ENCODE measurements at regions of chr11 and their contacts with region 1.

Region 1: GRCh38 chr11:62841361-62842184 is 2.2 kb upstream of the WDR74 start:
- DNase-seq: peak; percentile 87
- H3K4me3 Mint-ChIP-seq: no peak overlapping the region
- H3K27ac Mint-ChIP-seq: no peak overlapping the region
- H3K4me1 Mint-ChIP-seq: peaks cover 27% of the 10 kb centered on the region
- H3K27me3 Mint-ChIP-seq: no peaks in the 10 kb centered on the region

Region 2: DNA sequence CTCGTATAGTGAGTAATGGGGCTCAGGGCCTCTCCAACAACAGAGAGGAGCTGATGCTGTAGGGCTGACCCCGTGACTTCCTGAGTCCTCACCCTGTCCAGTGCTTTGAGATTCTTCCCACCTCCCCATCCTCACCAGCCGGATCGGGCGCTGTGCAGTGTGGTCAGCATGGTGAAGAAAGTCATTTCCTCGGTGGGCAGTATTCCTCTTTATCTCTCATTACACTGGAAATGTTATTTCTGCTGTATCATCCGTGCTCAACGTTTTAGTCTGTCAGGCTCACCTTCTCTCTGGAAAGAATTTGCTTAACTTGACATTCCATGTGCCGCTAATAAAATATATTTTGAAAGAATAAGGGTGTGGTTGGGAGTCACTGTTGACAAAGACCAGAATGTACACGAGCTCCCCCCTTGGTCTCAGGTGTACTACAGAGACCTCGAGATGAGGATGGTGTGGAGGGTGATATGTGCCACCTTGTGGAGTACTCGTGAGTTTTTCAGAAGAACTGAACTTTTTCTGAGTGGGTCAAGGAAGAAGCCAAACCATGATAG is 448.4 kb before region 1 on chr11:
- CTCF ChIA-PET with region 1: no interaction called
- POLR2A ChIA-PET with region 1: no interaction called
- DNase-seq: no peak
- H3K4me3 Mint-ChIP-seq: no peak overlapping the region
- H3K27ac Mint-ChIP-seq: no peak overlapping the region
- H3K4me1 Mint-ChIP-seq: peaks cover 4% of the 10 kb centered on the region
- H3K27me3 Mint-ChIP-seq: peaks cover 26% of the 10 kb centered on the region

Region 3: DNA sequence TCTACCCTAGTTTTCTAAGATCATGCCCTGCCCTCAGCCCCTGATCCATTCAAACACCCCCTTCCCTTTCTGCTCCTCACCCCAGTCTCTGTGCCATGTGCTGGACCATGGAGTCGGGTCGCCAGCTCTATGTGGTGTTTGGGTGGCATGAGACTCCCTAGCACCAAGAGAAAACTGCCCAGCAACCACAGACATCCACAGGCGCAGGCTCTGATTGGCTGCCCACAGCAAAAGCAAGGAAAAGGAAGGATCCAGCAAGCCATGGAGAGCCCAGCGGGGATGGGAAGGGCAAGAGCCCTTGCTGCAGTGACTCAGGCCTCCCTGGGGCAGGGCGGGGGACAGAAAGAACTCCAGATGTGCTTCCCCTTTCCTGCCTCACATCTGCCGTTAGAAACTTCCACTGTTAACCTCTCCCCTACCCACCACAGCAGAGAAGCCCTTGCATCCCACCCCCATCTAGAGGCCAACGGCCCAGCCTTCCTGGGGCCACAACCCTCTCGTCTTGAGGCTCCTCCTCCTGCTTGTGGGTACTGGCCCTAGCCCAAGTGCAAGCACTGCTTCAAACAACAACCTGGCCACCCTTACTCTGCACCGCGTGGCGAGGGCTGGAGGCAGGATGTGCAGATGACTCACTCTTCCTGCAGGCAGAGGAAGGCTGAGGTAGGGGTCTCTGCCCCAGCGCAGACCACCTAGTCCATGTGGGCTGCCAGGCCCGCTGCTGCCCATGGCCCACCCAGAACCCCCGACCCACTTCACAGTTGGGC is 285.3 kb before region 1 on chr11:
- CTCF ChIA-PET with region 1: no interaction called
- POLR2A ChIA-PET with region 1: interaction called, 39 read pairs
- DNase-seq: peak; percentile 94
- H3K4me3 Mint-ChIP-seq: peak overlapping the region; percentile 74
- H3K27ac Mint-ChIP-seq: peak overlapping the region; percentile 99
- H3K4me1 Mint-ChIP-seq: peaks cover 99% of the 10 kb centered on the region
- H3K27me3 Mint-ChIP-seq: no peaks in the 10 kb centered on the region

Region 4: DNA sequence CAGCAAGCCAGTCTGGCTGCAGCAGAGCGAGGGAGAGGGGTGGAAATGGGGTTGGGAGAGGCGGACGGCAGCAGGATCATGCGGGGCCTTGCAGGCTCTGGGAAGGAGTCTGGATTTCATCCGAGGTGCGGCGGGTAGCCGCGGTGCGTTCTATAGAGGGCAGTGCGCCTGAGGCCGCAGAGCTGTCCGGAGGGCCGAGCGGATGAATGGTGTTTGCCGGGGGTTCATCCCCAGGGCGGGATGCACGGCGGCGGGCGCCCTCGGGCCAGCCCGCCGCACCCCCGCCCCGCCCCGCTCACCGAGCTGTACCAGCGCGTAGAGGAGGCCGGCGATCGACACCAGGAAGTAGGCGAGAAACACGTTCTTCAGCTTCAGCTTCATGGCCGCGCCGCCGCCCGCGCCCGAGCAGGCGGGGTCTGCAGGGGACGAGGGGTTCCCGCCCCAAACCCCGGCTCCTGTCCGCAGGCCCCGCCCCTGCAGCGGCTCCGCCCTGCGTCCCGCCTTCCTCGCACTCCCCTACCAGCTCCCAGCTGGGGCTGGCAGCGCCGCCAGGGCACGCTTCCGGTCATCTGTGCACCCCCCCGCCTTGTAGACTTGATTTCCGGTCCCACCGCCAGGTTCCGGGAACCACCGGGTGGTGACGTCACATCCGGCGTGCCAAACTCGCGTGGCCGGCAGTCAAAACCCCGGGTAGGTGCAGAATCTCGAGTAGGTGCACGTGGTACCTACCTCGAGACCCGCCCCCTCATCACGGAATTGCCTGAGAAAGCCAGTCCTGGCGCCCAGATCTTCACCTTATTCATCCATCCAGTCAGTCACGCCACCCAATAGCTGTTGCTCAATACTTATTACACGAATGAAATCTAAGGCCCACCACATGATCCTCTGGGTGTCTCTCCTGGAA is 219.8 kb before region 1 on chr11 and contains the start of gene B3GAT3:
- CTCF ChIA-PET with region 1: no interaction called
- POLR2A ChIA-PET with region 1: interaction called, 14 read pairs
- DNase-seq: peak; percentile 97
- H3K4me3 Mint-ChIP-seq: peak within 1 kb of the TSS; percentile 87
- H3K27ac Mint-ChIP-seq: peak within 1 kb of the TSS; percentile 98
- H3K4me1 Mint-ChIP-seq: peaks cover 29% of the 10 kb centered on the region
- H3K27me3 Mint-ChIP-seq: no peaks in the 10 kb centered on the region
- total RNA-seq, gene B3GAT3: 58.9 to 67.1 TPM

Region 5: GRCh38 chr11:62687508-62688396 is 153.8 kb before region 1 on chr11:
- CTCF ChIA-PET with region 1: no interaction called
- POLR2A ChIA-PET with region 1: no interaction called
- DNase-seq: no peak
- H3K4me3 Mint-ChIP-seq: no peak overlapping the region
- H3K27ac Mint-ChIP-seq: no peak overlapping the region
- H3K4me1 Mint-ChIP-seq: no peaks in the 10 kb centered on the region
- H3K27me3 Mint-ChIP-seq: peaks cover 4% of the 10 kb centered on the region

Region 6: GRCh38 chr11:62705880-62706849 is 135.4 kb before region 1 on chr11:
- CTCF ChIA-PET with region 1: no interaction called
- POLR2A ChIA-PET with region 1: interaction called, 84 read pairs
- DNase-seq: peak; percentile 96
- H3K4me3 Mint-ChIP-seq: peak overlapping the region; percentile 92
- H3K27ac Mint-ChIP-seq: peak overlapping the region; percentile 69
- H3K4me1 Mint-ChIP-seq: peaks cover 56% of the 10 kb centered on the region
- H3K27me3 Mint-ChIP-seq: no peaks in the 10 kb centered on the region

Region 7: GRCh38 chr11:62771144-62772021 is 70.2 kb before region 1 on chr11 and contains the start of gene TAF6L:
- CTCF ChIA-PET with region 1: no interaction called
- POLR2A ChIA-PET with region 1: interaction called, 73 read pairs
- DNase-seq: peak; percentile 96
- H3K4me3 Mint-ChIP-seq: peak within 1 kb of the TSS; percentile 87
- H3K27ac Mint-ChIP-seq: peak within 1 kb of the TSS; percentile 88
- H3K4me1 Mint-ChIP-seq: peaks cover 30% of the 10 kb centered on the region
- H3K27me3 Mint-ChIP-seq: no peaks in the 10 kb centered on the region
- total RNA-seq, gene TAF6L: 15.2 to 16.0 TPM

Region 8: GRCh38 chr11:62805076-62805892 is 36.3 kb before region 1 on chr11 and contains the start of gene NXF1:
- CTCF ChIA-PET with region 1: no interaction called
- POLR2A ChIA-PET with region 1: interaction called, 104 read pairs
- DNase-seq: peak; percentile 96
- H3K4me3 Mint-ChIP-seq: peak within 1 kb of the TSS; percentile 90
- H3K27ac Mint-ChIP-seq: peak within 1 kb of the TSS; percentile 86
- H3K4me1 Mint-ChIP-seq: peaks cover 40% of the 10 kb centered on the region
- H3K27me3 Mint-ChIP-seq: no peaks in the 10 kb centered on the region
- total RNA-seq, gene NXF1: 80.3 to 82.4 TPM

Region 9: DNA sequence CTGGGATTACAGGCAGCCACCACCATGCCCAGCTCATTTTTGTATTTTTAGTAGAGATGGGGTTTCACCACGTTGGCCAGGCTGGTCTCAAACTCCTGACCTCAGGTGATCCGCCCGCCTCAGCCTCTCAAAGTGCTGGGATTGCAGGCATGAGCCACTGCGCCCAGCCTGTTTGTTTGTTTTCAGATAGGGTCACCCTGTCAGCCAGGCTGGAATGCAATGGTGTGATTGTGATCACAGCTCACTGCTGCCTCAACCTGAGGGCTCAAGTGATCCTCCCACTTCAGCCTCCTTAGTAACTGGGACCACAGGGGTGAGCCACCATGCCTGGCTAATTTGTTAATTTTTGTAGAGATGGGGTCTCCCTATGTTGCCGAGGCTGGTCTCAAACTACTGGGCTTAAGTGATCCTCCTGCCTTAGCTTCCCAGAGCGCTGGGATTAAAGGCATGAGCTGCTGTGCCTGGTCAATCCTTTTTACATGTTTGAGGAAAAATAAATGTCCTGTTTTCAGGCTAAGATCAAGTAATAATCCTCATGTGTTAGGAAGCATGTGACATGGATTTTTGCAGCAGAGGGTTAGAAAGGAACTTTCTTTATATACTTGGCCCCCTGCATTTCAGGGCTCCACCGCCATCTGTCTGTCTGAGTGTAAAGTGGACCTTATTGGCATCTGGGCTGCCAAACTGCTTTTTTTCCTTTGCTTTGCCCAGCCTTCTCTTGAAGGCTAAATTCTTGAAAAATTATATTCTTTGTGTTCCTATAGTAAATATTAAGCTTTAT is 34.3 kb after region 1 on chr11:
- CTCF ChIA-PET with region 1: interaction called, 10 read pairs
- POLR2A ChIA-PET with region 1: interaction called, 142 read pairs
- DNase-seq: no peak
- H3K4me3 Mint-ChIP-seq: no peak overlapping the region
- H3K27ac Mint-ChIP-seq: no peak overlapping the region
- H3K4me1 Mint-ChIP-seq: peaks cover 19% of the 10 kb centered on the region
- H3K27me3 Mint-ChIP-seq: no peaks in the 10 kb centered on the region

Region 10: GRCh38 chr11:62965574-62965973 is 124.0 kb after region 1 on chr11:
- CTCF ChIA-PET with region 1: no interaction called
- POLR2A ChIA-PET with region 1: no interaction called
- DNase-seq: no peak
- H3K4me3 Mint-ChIP-seq: no peak overlapping the region
- H3K27ac Mint-ChIP-seq: no peak overlapping the region
- H3K4me1 Mint-ChIP-seq: no peaks in the 10 kb centered on the region
- H3K27me3 Mint-ChIP-seq: peaks cover 39% of the 10 kb centered on the region